Aorta (tissue), 5 donors: ENCODE measurements at regions of chr11 and their contacts with region 1.

Region 1: DNA sequence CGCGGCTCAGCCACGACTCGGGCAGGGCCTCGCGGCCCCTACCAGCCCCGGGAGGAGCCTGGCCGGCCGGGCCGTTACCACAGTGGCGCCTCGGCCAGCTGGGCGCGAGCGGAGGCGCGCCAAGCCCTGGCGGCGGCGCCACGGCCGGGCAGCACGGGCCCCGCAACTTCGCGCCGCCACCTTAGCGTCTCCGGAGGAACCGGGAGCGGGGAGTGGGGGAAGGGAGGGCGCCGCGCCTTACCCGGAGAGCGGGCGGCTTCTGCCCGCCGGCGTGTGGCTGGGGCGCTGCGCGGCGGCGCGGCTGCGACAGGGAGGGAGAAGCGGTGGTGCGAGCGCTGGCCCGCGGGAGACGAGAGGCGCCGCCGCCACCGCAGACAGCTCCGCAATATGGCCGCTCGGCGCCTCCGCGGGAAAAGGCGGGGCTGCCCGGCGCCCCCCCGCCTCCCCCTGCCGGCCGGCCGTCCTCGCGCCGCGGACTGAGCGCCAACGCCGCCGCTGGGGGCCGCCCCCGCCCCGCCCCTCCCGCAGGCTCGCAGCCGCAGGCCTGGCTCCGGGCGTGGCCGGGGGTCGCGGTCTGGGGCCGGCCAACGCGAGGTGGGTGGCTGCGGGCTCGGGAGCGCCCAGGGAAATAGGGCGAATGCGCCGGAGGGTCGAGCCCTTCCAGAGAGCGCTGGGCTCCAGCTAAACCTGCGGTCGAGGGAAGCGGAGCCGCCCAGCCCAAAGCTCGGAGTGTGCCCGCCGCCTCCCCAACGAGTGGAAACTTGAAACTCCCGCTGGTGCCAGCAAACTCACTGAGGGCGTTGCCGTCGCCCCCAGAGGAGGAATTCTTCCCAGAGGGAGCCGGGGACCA is at the start of gene RDX:
- DNase-seq: peak; percentile 86 to 93
- ATAC-seq: peak; percentile 88
- H3K4me3 ChIP-seq: peak within 1 kb of the TSS; percentile 74 to 96
- H3K27ac ChIP-seq: peak within 1 kb of the TSS; percentile 87 to 94
- H3K4me1 ChIP-seq: no peaks in the 10 kb centered on the region
- H3K27me3 ChIP-seq: no peaks in the 10 kb centered on the region
- total RNA-seq, gene RDX: 110 to 144 TPM

Region 2: GRCh38 chr11:110349138-110349996 is 52.9 kb after region 1 on chr11:
- intact Hi-C with region 1: no loop called
- DNase-seq: no peak
- ATAC-seq: no peak
- H3K4me3 ChIP-seq: no peak overlapping the region
- H3K27ac ChIP-seq: no peak overlapping the region
- H3K4me1 ChIP-seq: no peaks in the 10 kb centered on the region
- H3K27me3 ChIP-seq: peaks cover 0 to 2% of the 10 kb centered on the region in 2 donors

Region 3: DNA sequence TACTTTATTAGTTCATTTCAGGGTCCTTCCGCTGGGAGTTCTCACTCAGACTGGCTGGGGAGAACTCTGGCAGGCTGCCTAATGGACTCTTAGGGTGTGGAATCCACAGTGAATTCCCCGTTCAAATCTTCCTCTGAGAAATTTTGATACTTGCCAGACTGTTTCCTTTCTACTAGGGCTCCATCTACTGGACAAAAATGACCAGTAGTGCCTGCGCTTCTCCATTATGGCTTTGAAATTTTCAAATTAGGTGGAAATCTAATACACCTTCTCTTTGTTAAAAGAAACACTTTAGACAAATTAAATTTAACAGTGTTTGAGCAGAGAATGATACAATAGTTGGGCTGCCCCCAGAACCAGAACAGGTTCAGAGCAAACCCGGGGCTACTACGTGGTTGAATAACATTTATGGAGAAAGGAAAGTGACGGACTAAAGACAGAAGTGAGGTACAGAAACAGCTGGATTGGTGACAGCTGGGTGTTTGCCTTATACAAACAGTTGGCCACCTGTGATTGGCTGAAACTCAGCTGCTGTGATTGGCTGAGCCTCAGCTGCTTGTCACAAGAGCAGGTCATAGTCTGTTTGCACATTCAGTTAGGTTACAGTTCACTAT is 80.4 kb after region 1 on chr11:
- intact Hi-C with region 1: loop called in 1 of 2 experiments (anchors 10 kb)
- DNase-seq: peak in 1 of 2 donors; percentile 75
- ATAC-seq: peak; percentile 82
- H3K4me3 ChIP-seq: no peak overlapping the region
- H3K27ac ChIP-seq: peak overlapping the region in 1 of 2 donors; percentile 26
- H3K4me1 ChIP-seq: no peaks in the 10 kb centered on the region
- H3K27me3 ChIP-seq: no peaks in the 10 kb centered on the region